Naive thymus-derived CD4-positive, alpha-beta T cell (primary cell): ENCODE measurements at regions of chr7 and their contacts with region 1.

Region 1: GRCh38 chr7:93337052-93337451 is 104.9 kb downstream of the VPS50 start:
- DNase-seq: no peak
- ATAC-seq: no peak
- H3K4me3 ChIP-seq: no peak overlapping the region
- H3K4me3 Mint-ChIP-seq: no peak overlapping the region
- H3K27ac ChIP-seq: no peak overlapping the region
- H3K27ac Mint-ChIP-seq: no peak overlapping the region
- H3K4me1 ChIP-seq: no peaks in the 10 kb centered on the region
- H3K4me1 Mint-ChIP-seq: no peaks in the 10 kb centered on the region
- H3K27me3 ChIP-seq: no peaks in the 10 kb centered on the region
- H3K27me3 Mint-ChIP-seq: no peaks in the 10 kb centered on the region

Region 2: GRCh38 chr7:93365341-93365740 is 28.3 kb after region 1 on chr7:
- CTCF ChIA-PET with region 1: no interaction called
- POLR2A ChIA-PET with region 1: interaction called, 11 read pairs
- intact Hi-C with region 1: no loop called
- DNase-seq: no peak
- ATAC-seq: no peak
- H3K4me3 ChIP-seq: no peak overlapping the region
- H3K4me3 Mint-ChIP-seq: no peak overlapping the region
- H3K27ac ChIP-seq: no peak overlapping the region
- H3K27ac Mint-ChIP-seq: peak overlapping the region in 1 of 9 donors; percentile 7
- H3K4me1 ChIP-seq: no peaks in the 10 kb centered on the region
- H3K4me1 Mint-ChIP-seq: peaks cover 0 to 2% (median 0%) of the 10 kb centered on the region in 7 donors
- H3K27me3 ChIP-seq: no peaks in the 10 kb centered on the region
- H3K27me3 Mint-ChIP-seq: peaks cover 0 to 15% (median 5%) of the 10 kb centered on the region in 5 donors